Caco-2 (cell line): ENCODE measurements at regions of chr20 and their contacts with region 1.

Region 1: GRCh38 chr20:44543358-44543757 is 21.5 kb upstream of the SERINC3 start:
- DNase-seq: no peak
- H3K4me3 ChIP-seq: no peak overlapping the region
- H3K4me3 Mint-ChIP-seq: no peak overlapping the region
- H3K27ac Mint-ChIP-seq: no peak overlapping the region
- H3K4me1 ChIP-seq: peaks cover 20% of the 10 kb centered on the region
- H3K4me1 Mint-ChIP-seq: peaks cover 18% of the 10 kb centered on the region
- H3K27me3 ChIP-seq: no peaks in the 10 kb centered on the region
- H3K27me3 Mint-ChIP-seq: no peaks in the 10 kb centered on the region
- CTCF ChIP-seq: no peak

Region 2: GRCh38 chr20:42836339-42836738 is 1707.0 kb before region 1 on chr20:
- CTCF ChIA-PET with region 1: no interaction called
- POLR2A ChIA-PET with region 1: interaction called, 10 read pairs
- intact Hi-C with region 1: no loop called
- DNase-seq: no peak
- H3K4me3 ChIP-seq: no peak overlapping the region
- H3K4me3 Mint-ChIP-seq: no peak overlapping the region
- H3K27ac Mint-ChIP-seq: no peak overlapping the region
- H3K4me1 ChIP-seq: no peaks in the 10 kb centered on the region
- H3K4me1 Mint-ChIP-seq: no peaks in the 10 kb centered on the region
- H3K27me3 ChIP-seq: no peaks in the 10 kb centered on the region
- H3K27me3 Mint-ChIP-seq: peaks cover 5% of the 10 kb centered on the region
- CTCF ChIP-seq: no peak